Activated CD4-positive, alpha-beta memory T cell treated with anti-CD3 and anti-CD28 coated beads for 36 hours (primary cell): ENCODE measurements at regions of chr11 and their contacts with region 1.

Region 1: GRCh38 chr11:5600374-5600851 is 4.0 kb downstream of the TRIM6 start:
- DNase-seq: peak; percentile 72
- H3K4me3 Mint-ChIP-seq: no peak overlapping the region
- H3K27ac Mint-ChIP-seq: no peak overlapping the region
- H3K4me1 Mint-ChIP-seq: peaks cover 8% of the 10 kb centered on the region
- H3K27me3 Mint-ChIP-seq: peaks cover 8% of the 10 kb centered on the region

Region 2: GRCh38 chr11:5476184-5476819 is 124.1 kb before region 1 on chr11:
- CTCF ChIA-PET with region 1: no interaction called
- POLR2A ChIA-PET with region 1: no interaction called
- intact Hi-C with region 1: no loop called
- DNase-seq: peak; percentile 42
- H3K4me3 Mint-ChIP-seq: no peak overlapping the region
- H3K27ac Mint-ChIP-seq: no peak overlapping the region
- H3K4me1 Mint-ChIP-seq: no peaks in the 10 kb centered on the region
- H3K27me3 Mint-ChIP-seq: peaks cover 21% of the 10 kb centered on the region

Region 3: DNA sequence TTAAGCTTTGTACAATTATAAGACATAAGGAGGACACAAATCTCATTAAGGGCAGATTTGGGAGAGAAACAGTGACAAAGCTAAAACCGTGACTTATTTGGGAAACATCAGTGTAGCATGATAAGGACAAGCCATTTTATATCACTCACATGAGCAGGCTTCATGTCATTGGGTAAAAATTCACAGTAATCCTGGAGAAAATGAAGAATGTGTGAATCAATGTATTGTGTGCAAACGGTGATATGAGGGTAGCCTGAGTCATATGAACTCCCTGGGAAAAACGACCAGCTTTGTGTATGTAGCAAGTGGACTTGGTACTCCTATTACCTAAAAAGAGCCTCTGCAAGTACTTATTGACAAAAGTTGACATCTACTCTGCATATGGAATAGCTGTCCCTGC is 18.4 kb after region 1 on chr11:
- CTCF ChIA-PET with region 1: interaction called, 13 read pairs
- POLR2A ChIA-PET with region 1: no interaction called
- intact Hi-C with region 1: no loop called
- DNase-seq: no peak
- H3K4me3 Mint-ChIP-seq: no peak overlapping the region
- H3K27ac Mint-ChIP-seq: no peak overlapping the region
- H3K4me1 Mint-ChIP-seq: peaks cover 2% of the 10 kb centered on the region
- H3K27me3 Mint-ChIP-seq: no peaks in the 10 kb centered on the region

Region 4: DNA sequence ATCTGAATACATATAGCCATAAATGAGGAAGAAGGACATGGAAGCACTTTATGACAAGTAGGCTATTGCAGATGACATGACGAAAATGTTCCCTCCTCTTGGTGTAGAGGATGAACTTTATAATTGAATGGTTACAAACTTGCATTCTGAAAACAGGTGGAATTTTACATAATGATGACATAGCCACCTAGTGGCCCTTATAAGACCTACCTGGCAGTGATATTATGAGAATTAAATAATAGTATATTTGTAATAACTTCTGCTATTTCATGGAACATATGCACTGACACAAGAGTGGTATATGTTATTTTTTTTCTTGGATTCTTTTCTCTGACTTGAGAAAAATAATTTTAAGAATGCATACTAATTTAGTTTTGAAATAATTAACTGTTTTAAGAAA is 112.1 kb after region 1 on chr11:
- CTCF ChIA-PET with region 1: interaction called, 3 read pairs
- POLR2A ChIA-PET with region 1: no interaction called
- intact Hi-C with region 1: loop called (anchors 1 kb)
- DNase-seq: no peak
- H3K4me3 Mint-ChIP-seq: no peak overlapping the region
- H3K27ac Mint-ChIP-seq: no peak overlapping the region
- H3K4me1 Mint-ChIP-seq: peaks cover 4% of the 10 kb centered on the region
- H3K27me3 Mint-ChIP-seq: no peaks in the 10 kb centered on the region

Region 5: GRCh38 chr11:5737091-5737490 is 136.7 kb after region 1 on chr11:
- CTCF ChIA-PET with region 1: no interaction called
- POLR2A ChIA-PET with region 1: no interaction called
- intact Hi-C with region 1: no loop called
- DNase-seq: no peak
- H3K4me3 Mint-ChIP-seq: no peak overlapping the region
- H3K27ac Mint-ChIP-seq: no peak overlapping the region
- H3K4me1 Mint-ChIP-seq: no peaks in the 10 kb centered on the region
- H3K27me3 Mint-ChIP-seq: no peaks in the 10 kb centered on the region

Region 6: GRCh38 chr11:5891216-5891800 is 290.9 kb after region 1 on chr11:
- CTCF ChIA-PET with region 1: interaction called, 3 read pairs
- POLR2A ChIA-PET with region 1: no interaction called
- intact Hi-C with region 1: loop called (anchors 5 kb)
- DNase-seq: no peak
- H3K4me3 Mint-ChIP-seq: no peak overlapping the region
- H3K27ac Mint-ChIP-seq: no peak overlapping the region
- H3K4me1 Mint-ChIP-seq: no peaks in the 10 kb centered on the region
- H3K27me3 Mint-ChIP-seq: peaks cover 2% of the 10 kb centered on the region

Region 7: GRCh38 chr11:5910540-5910939 is 310.1 kb after region 1 on chr11:
- CTCF ChIA-PET with region 1: no interaction called
- POLR2A ChIA-PET with region 1: no interaction called
- intact Hi-C with region 1: no loop called
- DNase-seq: no peak
- H3K4me3 Mint-ChIP-seq: no peak overlapping the region
- H3K27ac Mint-ChIP-seq: no peak overlapping the region
- H3K4me1 Mint-ChIP-seq: no peaks in the 10 kb centered on the region
- H3K27me3 Mint-ChIP-seq: peaks cover 10% of the 10 kb centered on the region